ENCODE measurements at regions of chr19 and their contacts with region 1.

Region 1: DNA sequence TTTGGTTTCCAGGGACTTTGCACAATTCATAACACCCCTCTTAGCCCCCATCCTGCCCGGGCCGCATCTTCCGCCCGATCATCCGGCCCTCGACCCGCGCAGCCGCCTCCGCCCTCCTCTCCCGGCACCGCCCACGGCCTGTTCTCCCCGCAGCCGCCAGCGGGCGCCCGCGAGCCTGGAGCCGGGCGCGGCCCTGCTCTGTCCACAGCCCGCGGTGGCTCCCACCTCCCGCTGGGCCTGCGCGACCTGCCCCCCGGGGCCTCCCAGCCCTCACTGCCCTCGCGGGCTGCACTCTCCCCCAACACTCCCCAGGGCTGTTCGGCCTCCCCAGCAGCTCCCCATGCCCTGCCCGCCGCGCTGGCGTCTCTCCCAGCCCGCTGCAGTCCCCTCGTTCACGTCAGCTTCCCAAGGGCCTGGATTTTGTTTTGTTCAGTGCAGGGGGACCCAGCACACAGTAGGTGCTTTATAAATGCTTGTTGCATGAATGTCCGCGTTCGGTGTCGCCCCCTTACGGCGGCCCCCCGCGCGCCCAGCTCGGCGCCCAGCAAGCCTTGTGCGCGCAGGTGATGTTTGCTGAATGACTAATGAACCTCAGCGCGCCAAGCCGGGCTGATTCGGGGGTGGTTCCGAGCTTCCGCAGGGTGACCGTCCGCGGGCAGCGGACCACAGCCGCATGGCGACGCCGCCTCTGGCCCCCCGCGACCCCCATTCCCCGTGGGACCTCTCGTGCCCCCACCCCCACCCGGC is 4.6 kb upstream of the APC2 start:
- DNase-seq: peak; percentile 74 to 85
- ATAC-seq: peak; percentile 86 to 90 (median 86)
- H3K4me3 ChIP-seq: peak overlapping the region; percentile 53
- H3K27ac ChIP-seq: no peak overlapping the region
- H3K4me1 ChIP-seq: peaks cover 3% of the 10 kb centered on the region
- H3K27me3 ChIP-seq: peaks cover 0 to 50% (median 31%) of the 10 kb centered on the region in 3 donors
- CTCF ChIP-seq: peak; percentile 87

Region 2: GRCh38 chr19:1315470-1316231 is 129.7 kb before region 1 on chr19:
- intact Hi-C with region 1: loop called in 1 of 2 experiments (anchors 5 kb)
- DNase-seq: peak; percentile 60 to 73
- ATAC-seq: peak; percentile 82 to 97 (median 88)
- H3K4me3 ChIP-seq: peak overlapping the region; percentile 45
- H3K27ac ChIP-seq: no peak overlapping the region
- H3K4me1 ChIP-seq: peaks cover 6% of the 10 kb centered on the region
- H3K27me3 ChIP-seq: peaks cover 0 to 69% (median 13%) of the 10 kb centered on the region in 3 donors
- CTCF ChIP-seq: peak; percentile 59

Region 3: DNA sequence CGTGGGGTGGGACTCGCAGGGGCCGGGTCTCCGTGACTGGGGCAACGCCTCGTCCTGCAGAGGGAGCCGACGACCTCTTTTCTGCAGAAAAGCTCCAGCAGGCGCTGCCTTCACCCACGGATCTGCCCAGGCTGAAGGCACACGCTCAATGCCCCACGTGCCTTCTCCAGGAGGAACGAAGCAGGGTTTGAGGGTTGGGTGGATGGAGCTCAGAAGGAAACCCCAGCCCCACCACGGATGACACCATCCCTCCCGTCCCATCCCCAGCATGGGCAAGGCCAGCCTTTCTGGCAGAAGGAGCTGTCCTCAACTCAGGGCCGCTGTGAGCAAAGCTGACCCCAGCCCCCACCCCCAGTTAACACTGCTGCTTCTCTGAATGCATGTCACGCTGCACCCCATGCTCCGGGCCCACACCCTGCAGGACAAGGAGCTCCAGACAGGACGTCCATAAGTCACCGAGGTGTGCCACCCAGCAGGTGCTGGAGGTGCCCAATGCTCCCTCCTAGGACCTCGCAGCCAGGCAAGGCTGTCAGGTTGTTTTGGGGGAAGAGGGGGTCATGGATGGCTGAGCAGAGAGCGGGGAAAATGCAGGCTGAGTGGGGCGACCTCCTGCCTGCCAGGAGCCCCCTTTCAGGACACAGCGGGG is 26.3 kb after region 1 on chr19:
- intact Hi-C with region 1: loop called in 1 of 2 experiments (anchors 1 kb)
- DNase-seq: peak in 1 of 2 donors; percentile 49
- ATAC-seq: no peak
- H3K4me3 ChIP-seq: peak overlapping the region; percentile 58
- H3K27ac ChIP-seq: no peak overlapping the region
- H3K4me1 ChIP-seq: peaks cover 50% of the 10 kb centered on the region
- H3K27me3 ChIP-seq: peaks cover 0 to 65% (median 59%) of the 10 kb centered on the region in 3 donors
- CTCF ChIP-seq: no peak